ENCODE measurements at regions of chr20 and their contacts with region 1.

Region 1: DNA sequence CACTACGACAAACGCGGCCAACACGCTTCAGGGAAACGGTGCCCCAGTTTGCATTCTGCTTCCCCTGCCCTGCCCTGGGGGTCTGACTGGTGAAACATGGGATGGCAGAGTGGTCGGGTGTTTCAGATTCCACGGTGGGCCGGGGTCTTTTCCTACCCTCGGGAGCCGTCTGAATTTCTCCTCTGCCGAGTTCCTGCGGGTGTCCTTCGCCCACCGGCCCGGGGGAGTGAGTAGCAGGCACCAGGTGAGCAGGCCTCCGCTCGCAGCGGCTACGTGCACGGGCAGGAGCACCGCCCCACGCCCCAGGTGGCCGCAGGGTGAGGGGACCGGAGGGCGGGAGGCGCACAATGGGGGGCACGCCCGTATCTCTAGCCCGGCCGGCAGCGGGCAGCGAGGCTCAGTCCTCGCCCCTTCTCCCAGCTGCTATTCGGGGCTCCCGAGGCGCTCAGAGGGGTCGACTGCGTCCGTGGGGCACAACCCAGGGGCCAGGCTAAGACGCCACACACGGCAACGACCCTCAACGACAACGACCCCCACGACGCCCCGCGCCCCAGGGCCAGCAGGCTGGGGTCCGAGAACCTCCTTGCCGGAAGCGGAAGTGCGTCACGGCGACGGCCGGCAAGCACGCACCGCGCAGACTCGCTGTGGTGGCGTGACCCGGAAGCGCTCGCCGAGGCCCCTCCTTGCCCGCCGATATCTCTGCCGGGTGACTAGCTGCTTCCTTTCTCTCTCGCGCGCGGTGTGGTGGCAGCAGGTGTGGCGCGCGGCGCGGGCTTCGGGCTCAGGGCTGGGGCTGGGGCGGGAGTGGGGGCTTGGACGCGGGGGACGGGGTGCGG is at the start of gene RPS21:
- DNase-seq: peak; percentile 94
- H3K27ac ChIP-seq: peak within 1 kb of the TSS; percentile 88
- CTCF ChIP-seq: no peak

Region 2: DNA sequence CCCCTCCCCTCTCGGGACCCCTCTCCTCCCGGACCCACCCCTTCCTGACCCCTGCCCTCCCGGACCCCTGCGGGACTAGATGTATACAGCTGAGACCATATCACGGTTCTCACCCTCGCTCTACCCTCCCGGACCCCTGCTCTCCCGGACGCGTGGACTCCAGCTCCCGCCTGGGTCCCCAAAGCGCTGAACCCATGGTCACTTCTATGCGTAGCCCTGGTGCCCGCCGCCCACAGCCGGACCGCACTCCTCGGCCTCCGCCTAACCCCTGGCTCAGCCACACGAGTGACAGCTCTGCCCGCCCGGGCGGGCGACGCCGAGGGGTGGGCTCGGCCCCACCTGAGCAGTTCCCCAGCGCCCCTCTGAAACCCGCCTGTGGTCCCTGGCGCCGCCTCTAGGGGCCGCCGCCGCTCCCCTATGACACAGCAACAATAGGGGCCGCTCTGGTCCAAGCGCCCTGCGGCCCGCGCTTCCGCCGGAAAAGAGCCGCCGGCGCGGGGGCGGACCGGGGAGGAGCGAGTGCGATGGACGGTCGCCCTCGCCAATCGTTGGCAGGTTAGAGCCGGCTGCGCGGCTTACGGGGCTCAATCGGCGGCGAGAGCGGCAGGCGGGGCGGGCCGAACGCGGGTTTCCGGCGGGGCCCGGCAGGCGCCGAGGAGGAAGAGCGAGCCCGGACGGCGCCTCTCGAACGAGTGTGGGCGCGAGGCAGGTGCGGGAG is 84.1 kb before region 1 on chr20 and contains the start of gene ADRM1:
- CTCF ChIA-PET with region 1: interaction called, 35 read pairs
- POLR2A ChIA-PET with region 1: interaction called, 3 read pairs
- DNase-seq: peak; percentile 100
- H3K27ac ChIP-seq: peak within 1 kb of the TSS; percentile 96
- CTCF ChIP-seq: peak; percentile 98

Region 3: GRCh38 chr20:62308102-62308822 is 78.3 kb before region 1 on chr20:
- CTCF ChIA-PET with region 1: interaction called, 35 read pairs
- POLR2A ChIA-PET with region 1: interaction called, 3 read pairs
- DNase-seq: no peak
- H3K27ac ChIP-seq: peak overlapping the region; percentile 96
- CTCF ChIP-seq: no peak

Region 4: DNA sequence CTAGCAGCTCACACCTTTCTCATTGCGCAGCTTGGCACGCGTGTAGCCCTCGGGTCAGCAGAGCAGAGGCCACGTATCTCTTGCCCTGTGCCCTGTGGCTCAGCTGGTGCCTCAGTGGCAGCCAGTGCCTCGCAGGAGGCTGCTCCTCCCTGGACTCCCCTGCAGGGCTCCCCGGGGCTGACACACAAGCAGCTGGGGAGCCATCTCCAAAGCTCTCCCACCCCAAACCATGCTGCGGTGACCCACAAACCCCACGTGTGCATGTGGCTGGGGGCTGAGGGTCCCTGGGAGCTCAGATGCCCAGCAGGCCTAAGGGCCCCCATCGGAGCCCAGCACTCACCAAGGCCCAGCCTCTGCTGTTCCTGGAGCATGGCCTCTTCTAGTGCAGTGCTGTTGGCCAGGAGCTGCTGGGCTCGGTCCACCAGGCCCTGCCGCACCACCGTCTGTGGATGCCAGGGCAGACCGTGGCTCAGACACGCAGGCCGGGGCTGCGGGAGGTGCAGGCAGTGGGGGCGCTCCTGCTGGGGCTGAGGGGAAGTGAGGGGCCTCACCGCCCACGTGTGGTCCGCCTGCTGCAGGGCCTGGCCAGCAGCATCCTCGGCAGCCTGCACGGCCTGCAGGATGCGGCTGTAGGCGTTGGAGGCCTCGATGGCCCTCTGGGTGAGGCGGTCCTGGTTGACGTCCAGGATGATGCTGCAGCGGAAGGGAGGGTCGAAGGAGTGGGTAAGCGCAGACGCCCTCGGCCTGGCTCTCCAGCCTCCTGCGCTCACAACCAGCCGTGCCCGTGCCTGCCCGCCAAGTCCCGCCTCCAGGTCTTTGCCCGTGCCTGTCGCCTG is 70.1 kb before region 1 on chr20:
- CTCF ChIA-PET with region 1: interaction called, 16 read pairs
- POLR2A ChIA-PET with region 1: interaction called, 3 read pairs
- DNase-seq: no peak
- H3K27ac ChIP-seq: peak overlapping the region; percentile 87
- CTCF ChIP-seq: no peak

Region 5: DNA sequence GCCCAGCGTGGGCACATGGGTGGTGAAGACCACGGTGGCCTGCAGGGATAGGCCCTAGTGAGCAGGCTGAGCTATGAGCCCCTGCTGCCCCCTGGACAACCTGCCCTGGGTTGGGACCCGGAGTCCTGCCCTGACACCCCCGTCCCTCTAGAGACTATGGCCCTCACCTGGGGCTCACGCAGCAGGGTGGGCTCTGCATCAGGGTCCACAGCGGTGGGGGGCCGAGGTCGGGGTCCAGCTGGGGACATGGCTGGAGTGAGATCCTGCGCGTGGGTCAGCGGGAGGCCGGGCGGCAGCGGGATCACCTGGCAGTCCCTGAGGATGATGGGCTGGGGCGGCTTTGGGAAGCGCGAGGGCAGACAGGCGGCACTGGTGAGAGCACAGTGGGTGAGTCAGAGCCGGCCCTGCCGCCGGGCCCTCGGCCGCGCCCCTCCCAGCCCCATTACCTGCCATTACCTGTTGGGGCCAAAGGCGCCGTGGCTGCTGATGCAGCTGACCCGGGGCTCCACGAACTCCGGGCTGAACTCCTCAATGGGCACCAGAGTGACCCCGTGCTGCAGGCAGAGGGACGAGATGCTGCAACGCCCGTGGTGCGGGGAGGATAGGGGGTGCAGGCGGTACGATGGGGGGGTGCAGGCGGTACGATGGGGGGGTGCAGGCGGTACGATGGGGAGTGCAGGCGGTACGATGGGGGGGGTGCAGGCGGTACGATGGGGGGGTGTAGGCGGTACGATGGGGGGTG is 55.9 kb before region 1 on chr20:
- CTCF ChIA-PET with region 1: interaction called, 14 read pairs
- POLR2A ChIA-PET with region 1: no interaction called
- DNase-seq: no peak
- H3K27ac ChIP-seq: peak overlapping the region; percentile 80
- CTCF ChIP-seq: no peak

Region 6: GRCh38 chr20:62357187-62357667 is 29.4 kb before region 1 on chr20:
- CTCF ChIA-PET with region 1: interaction called, 173 read pairs
- POLR2A ChIA-PET with region 1: interaction called, 4 read pairs
- DNase-seq: peak; percentile 88
- H3K27ac ChIP-seq: peak overlapping the region; percentile 100
- CTCF ChIP-seq: no peak

Region 7: GRCh38 chr20:62368976-62369814 is 17.4 kb before region 1 on chr20:
- CTCF ChIA-PET with region 1: interaction called, 173 read pairs
- POLR2A ChIA-PET with region 1: interaction called, 22 read pairs
- DNase-seq: peak; percentile 84
- H3K27ac ChIP-seq: peak overlapping the region; percentile 100
- CTCF ChIP-seq: peak; percentile 59